Right lobe of liver (tissue), 6 donors: ENCODE measurements at regions of chr2 and their contacts with region 1.

Region 1: DNA sequence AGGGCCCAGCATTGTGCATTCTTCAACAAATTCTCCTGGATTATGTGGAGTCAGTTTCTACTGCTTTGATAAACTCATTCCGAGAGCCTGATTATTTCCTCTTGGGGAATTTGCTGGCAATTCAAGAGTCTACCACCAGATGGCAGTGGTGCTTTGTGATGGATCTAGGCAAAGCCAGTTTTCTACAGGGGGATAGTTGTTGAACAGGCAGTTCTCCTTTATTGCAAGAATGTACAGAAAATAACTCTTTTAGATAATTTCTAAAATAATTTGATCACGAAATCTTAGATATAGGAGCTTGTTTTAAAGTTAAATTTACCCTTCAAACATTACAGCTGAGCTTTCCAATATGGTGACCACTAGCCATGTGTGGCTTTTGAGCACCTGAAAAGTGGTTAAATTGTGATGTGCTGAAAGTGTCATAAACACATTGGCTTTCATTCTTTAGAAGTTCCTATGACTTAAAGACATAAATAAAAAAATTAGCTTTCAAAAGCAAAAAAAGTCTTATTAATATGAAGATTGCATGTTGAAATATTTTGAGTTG is 66.7 kb upstream of the HAAO start:
- DNase-seq: peak in 1 of 3 donors; percentile 64
- ATAC-seq: peak; percentile 54 to 74 (median 70)
- H3K4me3 ChIP-seq: no peak overlapping the region
- H3K27ac ChIP-seq: no peak overlapping the region
- H3K4me1 ChIP-seq: peaks cover 0 to 7% (median 3%) of the 10 kb centered on the region in 4 donors
- H3K27me3 ChIP-seq: no peaks in the 10 kb centered on the region
- CTCF ChIP-seq: peak; percentile 93 to 98 (median 94)
- POLR2A ChIP-seq: no peak

Region 2: GRCh38 chr2:42385225-42385624 is 473.9 kb before region 1 on chr2:
- intact Hi-C with region 1: no loop called
- DNase-seq: peak in 1 of 3 donors; percentile 31
- ATAC-seq: no peak
- H3K4me3 ChIP-seq: no peak overlapping the region
- H3K27ac ChIP-seq: no peak overlapping the region
- H3K4me1 ChIP-seq: no peaks in the 10 kb centered on the region
- H3K27me3 ChIP-seq: no peaks in the 10 kb centered on the region
- CTCF ChIP-seq: no peak
- POLR2A ChIP-seq: no peak

Region 3: GRCh38 chr2:42944779-42945415 is 85.8 kb after region 1 on chr2:
- intact Hi-C with region 1: loop called in 1 of 2 experiments (anchors 10 kb)
- DNase-seq: peak in 1 of 3 donors; percentile 41
- ATAC-seq: no peak
- H3K4me3 ChIP-seq: no peak overlapping the region
- H3K27ac ChIP-seq: no peak overlapping the region
- H3K4me1 ChIP-seq: peaks cover 0 to 20% (median 6%) of the 10 kb centered on the region in 4 donors
- H3K27me3 ChIP-seq: no peaks in the 10 kb centered on the region
- CTCF ChIP-seq: no peak
- POLR2A ChIP-seq: no peak

Region 4: GRCh38 chr2:42996528-42996927 is 137.4 kb after region 1 on chr2:
- intact Hi-C with region 1: no loop called
- DNase-seq: no peak
- ATAC-seq: no peak
- H3K4me3 ChIP-seq: no peak overlapping the region
- H3K27ac ChIP-seq: no peak overlapping the region
- H3K4me1 ChIP-seq: no peaks in the 10 kb centered on the region
- H3K27me3 ChIP-seq: no peaks in the 10 kb centered on the region
- CTCF ChIP-seq: no peak
- POLR2A ChIP-seq: no peak